MCF 10A (cell line): ENCODE measurements at regions of chr20 and their contacts with region 1.

Region 1: GRCh38 chr20:38073307-38074071 is 39.9 kb downstream of the RPRD1B start:
- DNase-seq: peak; percentile 94
- H3K4me3 Mint-ChIP-seq: peak overlapping the region; percentile 31
- H3K27ac Mint-ChIP-seq: peak overlapping the region; percentile 44
- H3K4me1 Mint-ChIP-seq: peaks cover 21% of the 10 kb centered on the region
- H3K27me3 Mint-ChIP-seq: no peaks in the 10 kb centered on the region
- CTCF ChIP-seq: peak; percentile 47

Region 2: DNA sequence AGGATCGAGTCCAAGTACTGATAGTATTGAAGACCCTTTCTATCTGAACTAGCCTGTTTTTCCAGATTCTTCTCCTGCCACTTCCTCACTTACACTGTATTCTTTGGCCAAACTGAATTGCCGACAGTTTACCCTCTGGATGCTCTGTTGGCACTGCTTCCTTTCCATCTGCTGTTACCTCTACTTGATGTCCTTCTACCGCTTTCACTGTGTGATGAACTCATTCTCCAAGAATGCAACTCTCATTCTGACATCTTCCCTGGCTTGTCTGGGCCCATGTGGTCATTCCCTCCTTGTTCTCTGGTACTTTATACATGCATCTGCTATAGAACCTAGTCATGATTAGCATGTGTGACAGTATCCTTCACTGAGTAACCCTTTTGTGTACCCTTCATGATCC is 23.7 kb before region 1 on chr20:
- CTCF ChIA-PET with region 1: interaction called, 155 read pairs
- POLR2A ChIA-PET with region 1: interaction called, 3 read pairs
- intact Hi-C with region 1: no loop called
- DNase-seq: peak; percentile 39
- H3K4me3 Mint-ChIP-seq: no peak overlapping the region
- H3K27ac Mint-ChIP-seq: peak overlapping the region; percentile 1
- H3K4me1 Mint-ChIP-seq: peaks cover 21% of the 10 kb centered on the region
- H3K27me3 Mint-ChIP-seq: no peaks in the 10 kb centered on the region
- CTCF ChIP-seq: no peak

Region 3: DNA sequence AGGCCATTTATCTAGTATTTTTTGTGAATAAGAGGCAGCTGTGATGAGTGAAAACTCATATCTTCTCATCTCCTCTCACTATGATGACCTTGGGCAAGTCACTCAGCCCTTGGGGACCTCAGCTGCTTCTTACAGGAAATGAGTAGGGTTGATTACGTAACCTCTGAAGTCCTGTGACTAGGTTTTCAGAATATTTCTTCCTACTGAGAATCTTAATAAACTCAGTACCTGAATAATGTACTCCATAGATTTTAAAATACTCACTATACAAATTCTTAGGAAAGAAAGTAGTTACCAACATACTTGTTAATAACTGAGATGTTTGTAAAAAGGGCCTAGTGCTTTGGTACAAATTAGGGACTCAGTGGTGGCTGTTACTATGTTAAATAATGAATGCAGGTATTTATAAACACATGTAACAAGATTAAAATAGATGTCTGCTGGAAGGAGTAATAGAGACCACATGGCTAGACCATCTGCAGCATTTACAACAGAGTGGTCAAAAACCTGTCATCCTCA is 20.9 kb after region 1 on chr20:
- CTCF ChIA-PET with region 1: interaction called, 49 read pairs
- POLR2A ChIA-PET with region 1: interaction called, 5 read pairs
- intact Hi-C with region 1: no loop called
- DNase-seq: peak; percentile 73
- H3K4me3 Mint-ChIP-seq: no peak overlapping the region
- H3K27ac Mint-ChIP-seq: peak overlapping the region; percentile 52
- H3K4me1 Mint-ChIP-seq: peaks cover 12% of the 10 kb centered on the region
- H3K27me3 Mint-ChIP-seq: no peaks in the 10 kb centered on the region
- CTCF ChIP-seq: no peak

Region 4: GRCh38 chr20:38143646-38144554 is 70.4 kb after region 1 on chr20:
- CTCF ChIA-PET with region 1: interaction called, 19 read pairs
- POLR2A ChIA-PET with region 1: interaction called, 4 read pairs
- intact Hi-C with region 1: no loop called
- DNase-seq: peak; percentile 97
- H3K4me3 Mint-ChIP-seq: peak overlapping the region; percentile 40
- H3K27ac Mint-ChIP-seq: peak overlapping the region; percentile 95
- H3K4me1 Mint-ChIP-seq: peaks cover 38% of the 10 kb centered on the region
- H3K27me3 Mint-ChIP-seq: no peaks in the 10 kb centered on the region
- CTCF ChIP-seq: no peak

Region 5: DNA sequence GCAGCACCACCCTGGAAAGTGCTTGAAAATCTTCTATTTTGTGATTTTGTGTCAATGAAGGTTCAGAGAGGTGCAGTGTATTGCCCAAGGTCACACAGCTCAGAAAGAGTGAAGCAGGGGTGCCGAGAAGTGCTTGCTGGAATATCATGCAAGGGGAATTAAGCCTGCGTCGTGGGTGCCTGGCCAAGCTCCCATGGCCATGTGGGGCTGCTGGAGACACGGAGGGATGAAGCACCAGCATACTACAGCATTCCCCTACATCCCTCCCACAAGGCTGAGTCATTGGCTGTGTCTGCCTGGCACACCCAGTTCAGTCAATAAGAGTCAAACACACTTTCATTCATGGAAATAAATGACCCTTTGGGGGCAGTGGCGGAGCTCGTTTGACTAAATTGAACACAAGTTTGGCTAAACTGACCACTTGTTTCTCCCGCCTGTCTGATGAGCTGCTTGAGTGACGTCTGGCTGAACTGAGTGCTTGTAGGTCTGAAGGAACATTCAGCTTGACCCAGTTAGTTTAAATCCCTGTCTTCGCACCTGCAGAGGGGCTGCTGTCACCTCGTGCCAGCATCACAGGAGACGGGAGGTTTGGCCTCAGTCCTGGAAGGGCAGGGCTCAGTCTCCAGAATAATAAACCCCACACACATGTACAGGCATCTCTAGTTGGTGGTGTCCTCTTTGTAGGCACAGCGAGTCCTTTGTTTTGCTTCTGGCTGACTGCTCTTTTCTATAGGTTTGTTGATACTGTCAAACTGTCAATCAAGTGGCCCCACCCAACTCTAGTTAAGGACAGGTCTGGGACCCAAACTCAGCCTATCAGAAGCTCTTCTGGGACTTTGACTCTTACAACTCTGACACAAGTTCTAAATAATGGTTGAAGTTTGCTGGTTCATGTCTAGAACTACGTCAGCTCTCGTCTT is 100.0 kb after region 1 on chr20:
- CTCF ChIA-PET with region 1: interaction called, 70 read pairs
- POLR2A ChIA-PET with region 1: interaction called, 5 read pairs
- intact Hi-C with region 1: loop called (anchors 2 kb)
- DNase-seq: peak; percentile 84
- H3K4me3 Mint-ChIP-seq: no peak overlapping the region
- H3K27ac Mint-ChIP-seq: peak overlapping the region; percentile 2
- H3K4me1 Mint-ChIP-seq: peaks cover 36% of the 10 kb centered on the region
- H3K27me3 Mint-ChIP-seq: no peaks in the 10 kb centered on the region
- CTCF ChIP-seq: no peak

Region 6: GRCh38 chr20:38239441-38239840 is 166.0 kb after region 1 on chr20:
- CTCF ChIA-PET with region 1: no interaction called
- POLR2A ChIA-PET with region 1: no interaction called
- intact Hi-C with region 1: no loop called
- DNase-seq: no peak
- H3K4me3 Mint-ChIP-seq: no peak overlapping the region
- H3K27ac Mint-ChIP-seq: no peak overlapping the region
- H3K4me1 Mint-ChIP-seq: no peaks in the 10 kb centered on the region
- H3K27me3 Mint-ChIP-seq: no peaks in the 10 kb centered on the region
- CTCF ChIP-seq: no peak

Region 7: GRCh38 chr20:38304845-38305447 is 231.5 kb after region 1 on chr20:
- CTCF ChIA-PET with region 1: interaction called, 4 read pairs
- POLR2A ChIA-PET with region 1: no interaction called
- intact Hi-C with region 1: loop called (anchors 2 kb)
- DNase-seq: peak; percentile 63
- H3K4me3 Mint-ChIP-seq: no peak overlapping the region
- H3K27ac Mint-ChIP-seq: no peak overlapping the region
- H3K4me1 Mint-ChIP-seq: no peaks in the 10 kb centered on the region
- H3K27me3 Mint-ChIP-seq: peaks cover 37% of the 10 kb centered on the region
- CTCF ChIP-seq: peak; percentile 55